Endothelial cell of umbilical vein (primary cell): ENCODE measurements at regions of chr2 and their contacts with region 1.

Region 1: DNA sequence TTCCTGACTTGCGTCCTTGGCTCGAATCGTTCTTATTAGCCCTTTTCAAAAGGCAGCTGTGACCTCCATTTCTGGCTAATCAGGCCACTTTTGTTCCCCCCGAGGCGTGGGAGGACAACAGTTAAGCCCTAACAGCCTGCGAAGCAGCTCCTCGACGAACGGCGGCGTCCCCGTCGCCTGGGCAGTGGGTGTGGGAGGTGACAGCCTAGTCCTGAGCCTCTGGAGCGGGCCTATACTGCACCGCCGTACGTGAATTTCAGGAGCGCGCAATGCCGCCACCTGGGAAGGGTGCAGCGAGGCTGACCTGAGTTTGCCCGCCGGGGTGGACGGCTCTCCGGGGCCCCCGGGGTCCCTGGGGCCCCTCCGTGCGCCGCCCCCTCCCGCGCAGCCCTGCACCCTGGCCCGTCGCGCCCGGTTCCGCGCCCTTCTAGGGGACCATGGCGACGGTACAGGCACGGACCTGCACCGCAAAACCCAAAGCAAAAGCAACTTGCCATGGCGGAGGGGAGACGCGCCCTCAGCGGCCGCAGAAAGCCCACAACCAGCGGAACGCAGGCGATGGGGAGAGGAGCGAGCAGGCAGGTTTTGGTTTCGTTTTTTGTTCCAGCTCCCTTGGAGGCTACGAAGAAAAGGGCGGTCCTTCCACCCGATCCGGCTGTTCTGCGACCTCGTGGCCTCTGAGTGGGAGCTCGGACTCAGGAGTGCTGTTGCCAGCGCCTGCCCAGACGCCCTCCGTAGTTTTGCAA is at the start of gene RBM43:
- DNase-seq: peak; percentile 91
- H3K4me3 ChIP-seq: peak within 1 kb of the TSS; percentile 48 to 88 (median 82)
- H3K27ac ChIP-seq: peak within 1 kb of the TSS; percentile 91
- H3K4me1 ChIP-seq: peaks cover 9% of the 10 kb centered on the region
- H3K27me3 ChIP-seq: no peaks in the 10 kb centered on the region
- CTCF ChIP-seq: no peak
- POLR2A ChIP-seq: peak; percentile 51
- total RNA-seq, gene RBM43: 6.4 and 6.5 TPM in 2 replicates

Region 2: DNA sequence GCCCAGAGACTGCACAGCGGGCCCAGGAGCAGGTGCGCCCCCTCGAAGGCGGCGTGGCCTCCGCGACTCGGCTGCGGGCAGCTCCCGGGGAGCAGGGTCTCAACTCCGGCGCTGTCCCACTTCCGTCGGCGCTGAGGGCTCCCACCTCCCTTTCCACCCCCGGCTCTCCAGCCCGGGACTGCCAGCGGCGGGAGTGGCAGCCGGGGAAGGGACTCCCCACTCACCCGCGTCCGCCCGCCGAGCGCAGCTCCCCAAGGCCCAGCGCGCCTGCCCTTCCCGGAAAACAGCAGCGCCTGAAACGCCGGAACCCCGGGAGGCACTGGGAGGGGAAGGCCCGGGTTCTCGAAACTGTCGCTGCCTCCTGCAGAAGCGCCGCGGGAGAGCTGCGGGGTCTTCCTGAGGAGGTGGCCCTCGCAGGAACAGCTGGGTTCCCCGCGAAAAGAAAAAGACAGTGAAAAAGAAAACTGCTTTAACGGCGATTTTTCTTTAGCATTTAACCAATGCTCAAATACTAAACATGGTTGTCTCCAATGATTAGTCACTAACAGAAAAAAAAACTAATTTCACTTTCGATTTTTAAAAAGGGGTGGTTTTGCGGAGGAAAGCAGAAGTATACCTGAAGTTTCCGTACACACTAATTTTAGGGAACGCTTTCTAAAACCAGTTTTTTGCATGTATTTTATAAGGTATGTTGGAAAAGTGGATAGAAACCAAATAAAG is 28.1 kb after region 1 on chr2 and contains the start of gene NMI:
- CTCF ChIA-PET with region 1: interaction called, 6 read pairs
- POLR2A ChIA-PET with region 1: interaction called, 4 read pairs
- dilution Hi-C with region 1: no loop called
- intact Hi-C with region 1: loop called (anchors 1 kb)
- DNase-seq: peak; percentile 82
- H3K4me3 ChIP-seq: peak within 1 kb of the TSS; percentile 75 to 99 (median 78)
- H3K27ac ChIP-seq: peak within 1 kb of the TSS; percentile 90
- H3K4me1 ChIP-seq: peaks cover 16% of the 10 kb centered on the region
- H3K27me3 ChIP-seq: no peaks in the 10 kb centered on the region
- CTCF ChIP-seq: peak in 1 of 2 donors; percentile 15
- POLR2A ChIP-seq: peak; percentile 53
- total RNA-seq, gene NMI: 17.1 and 24.9 TPM in 2 replicates

Region 3: DNA sequence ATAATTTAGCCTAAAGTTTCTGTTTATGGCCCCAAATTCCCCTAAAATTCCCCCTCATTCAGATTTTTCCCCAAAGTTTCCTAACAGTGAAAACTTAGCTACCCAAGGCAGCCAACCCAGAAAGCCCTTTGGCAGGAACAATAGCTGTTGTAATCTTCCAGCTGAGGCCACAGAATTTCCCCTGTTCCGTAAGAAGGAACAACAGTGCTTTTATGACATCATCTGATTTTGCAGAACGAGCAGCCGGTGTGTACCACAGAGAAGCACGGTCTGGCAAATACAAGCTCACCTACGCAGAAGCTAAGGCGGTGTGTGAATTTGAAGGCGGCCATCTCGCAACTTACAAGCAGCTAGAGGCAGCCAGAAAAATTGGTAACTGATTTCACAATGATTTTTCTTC is 102.3 kb after region 1 on chr2:
- CTCF ChIA-PET with region 1: no interaction called
- POLR2A ChIA-PET with region 1: no interaction called
- dilution Hi-C with region 1: no loop called
- intact Hi-C with region 1: no loop called
- DNase-seq: peak; percentile 40
- H3K4me3 ChIP-seq: no peak overlapping the region
- H3K27ac ChIP-seq: no peak overlapping the region
- H3K4me1 ChIP-seq: no peaks in the 10 kb centered on the region
- H3K27me3 ChIP-seq: no peaks in the 10 kb centered on the region
- CTCF ChIP-seq: no peak
- POLR2A ChIP-seq: no peak

Region 4: DNA sequence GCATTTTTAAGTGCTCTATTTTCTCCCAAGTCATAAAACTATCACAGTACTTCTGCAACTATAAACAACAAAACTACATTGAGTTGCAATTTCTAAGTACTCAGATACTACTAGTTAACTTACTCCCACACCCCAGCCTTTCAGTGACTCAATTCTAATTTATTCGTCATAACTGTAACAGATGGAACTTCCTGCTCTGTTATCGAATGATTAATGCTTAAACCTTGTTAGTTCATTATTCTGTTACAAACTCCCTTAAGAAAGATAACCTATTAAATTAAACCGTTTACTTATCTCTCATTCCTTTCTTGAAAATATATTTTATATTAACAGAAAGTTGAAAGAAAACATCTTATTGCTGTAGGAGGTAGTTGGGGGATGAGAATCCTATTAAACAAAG is 113.0 kb after region 1 on chr2:
- CTCF ChIA-PET with region 1: no interaction called
- POLR2A ChIA-PET with region 1: no interaction called
- dilution Hi-C with region 1: no loop called
- intact Hi-C with region 1: loop called (anchors 1 kb)
- DNase-seq: peak; percentile 66
- H3K4me3 ChIP-seq: no peak overlapping the region
- H3K27ac ChIP-seq: peak overlapping the region; percentile 55
- H3K4me1 ChIP-seq: peaks cover 10% of the 10 kb centered on the region
- H3K27me3 ChIP-seq: no peaks in the 10 kb centered on the region
- CTCF ChIP-seq: no peak
- POLR2A ChIP-seq: no peak

Region 5: DNA sequence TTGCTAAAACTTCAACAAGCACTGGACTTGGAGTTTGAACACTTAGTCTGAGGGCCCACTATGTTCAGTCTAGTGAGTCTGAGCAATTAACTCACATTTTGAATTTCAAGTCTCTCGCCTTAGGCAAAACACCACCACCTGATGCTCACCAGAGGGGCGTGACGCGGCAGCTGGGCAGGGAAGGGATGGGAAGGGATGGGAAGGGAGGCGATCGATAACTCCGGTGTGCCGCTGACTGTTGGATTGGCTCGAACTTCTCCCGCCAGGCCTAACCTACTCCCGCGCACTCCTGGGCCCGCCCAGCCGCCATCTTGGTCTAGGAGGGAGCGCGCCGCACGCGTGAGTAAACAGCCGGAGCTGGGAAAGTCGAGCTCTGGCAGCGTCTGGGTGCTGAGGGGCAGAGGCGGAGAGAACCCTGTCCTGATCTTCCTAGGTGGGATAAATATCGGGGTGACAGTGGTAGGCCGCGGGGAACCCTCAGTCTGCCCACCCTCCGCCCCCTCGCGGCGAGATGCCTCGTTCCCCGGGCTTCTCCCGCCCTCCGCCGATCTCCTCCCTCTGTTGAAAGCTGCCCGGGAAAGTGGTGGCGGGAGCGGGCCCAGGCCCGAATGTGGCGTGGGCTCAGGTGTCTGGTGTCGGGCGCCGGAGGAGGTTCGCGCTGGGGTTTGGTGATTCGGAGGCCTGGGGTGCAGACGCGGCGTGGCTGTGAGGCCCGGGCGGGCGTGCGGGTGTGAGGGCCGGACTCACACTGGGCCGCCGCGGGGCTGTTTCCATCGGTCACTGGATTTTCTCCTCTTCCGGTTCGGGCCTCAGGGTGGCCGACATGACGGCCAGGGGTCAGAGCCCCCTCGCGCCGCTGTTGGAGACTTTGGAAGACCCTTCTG is 148.4 kb after region 1 on chr2 and contains the start of gene RIF1:
- CTCF ChIA-PET with region 1: interaction called, 14 read pairs
- POLR2A ChIA-PET with region 1: no interaction called
- dilution Hi-C with region 1: no loop called
- intact Hi-C with region 1: loop called (anchors 1 kb)
- DNase-seq: peak; percentile 90
- H3K4me3 ChIP-seq: peak within 1 kb of the TSS; percentile 89 to 100 (median 97)
- H3K27ac ChIP-seq: peak within 1 kb of the TSS; percentile 60
- H3K4me1 ChIP-seq: peaks cover 7% of the 10 kb centered on the region
- H3K27me3 ChIP-seq: no peaks in the 10 kb centered on the region
- CTCF ChIP-seq: peak; percentile 50 to 79
- POLR2A ChIP-seq: peak; percentile 77
- total RNA-seq, gene RIF1: 43.7 and 55.3 TPM in 2 replicates

Region 6: DNA sequence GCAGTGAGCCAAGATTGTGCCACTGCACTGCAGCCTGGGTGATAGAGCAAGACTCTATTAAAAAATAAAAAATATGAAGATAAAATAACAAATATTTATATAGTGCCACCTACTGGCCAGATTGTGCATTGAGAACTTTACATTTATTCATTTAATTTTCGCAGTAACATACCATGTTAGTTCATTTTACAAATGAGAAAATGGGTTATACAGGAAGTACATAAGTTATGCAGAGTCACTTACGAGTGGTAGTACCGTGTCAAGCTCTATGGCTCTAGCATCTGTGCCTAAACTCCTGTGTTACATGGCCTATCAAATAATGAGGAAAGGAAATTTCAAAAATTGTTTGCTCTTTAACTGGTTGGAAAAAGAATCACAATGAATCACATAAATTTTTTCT is 176.2 kb after region 1 on chr2:
- CTCF ChIA-PET with region 1: interaction called, 17 read pairs
- POLR2A ChIA-PET with region 1: no interaction called
- dilution Hi-C with region 1: no loop called
- intact Hi-C with region 1: loop called (anchors 2 kb)
- DNase-seq: peak; percentile 58
- H3K4me3 ChIP-seq: no peak overlapping the region
- H3K27ac ChIP-seq: no peak overlapping the region
- H3K4me1 ChIP-seq: no peaks in the 10 kb centered on the region
- H3K27me3 ChIP-seq: no peaks in the 10 kb centered on the region
- CTCF ChIP-seq: peak; percentile 25 to 39
- POLR2A ChIP-seq: no peak

Region 7: DNA sequence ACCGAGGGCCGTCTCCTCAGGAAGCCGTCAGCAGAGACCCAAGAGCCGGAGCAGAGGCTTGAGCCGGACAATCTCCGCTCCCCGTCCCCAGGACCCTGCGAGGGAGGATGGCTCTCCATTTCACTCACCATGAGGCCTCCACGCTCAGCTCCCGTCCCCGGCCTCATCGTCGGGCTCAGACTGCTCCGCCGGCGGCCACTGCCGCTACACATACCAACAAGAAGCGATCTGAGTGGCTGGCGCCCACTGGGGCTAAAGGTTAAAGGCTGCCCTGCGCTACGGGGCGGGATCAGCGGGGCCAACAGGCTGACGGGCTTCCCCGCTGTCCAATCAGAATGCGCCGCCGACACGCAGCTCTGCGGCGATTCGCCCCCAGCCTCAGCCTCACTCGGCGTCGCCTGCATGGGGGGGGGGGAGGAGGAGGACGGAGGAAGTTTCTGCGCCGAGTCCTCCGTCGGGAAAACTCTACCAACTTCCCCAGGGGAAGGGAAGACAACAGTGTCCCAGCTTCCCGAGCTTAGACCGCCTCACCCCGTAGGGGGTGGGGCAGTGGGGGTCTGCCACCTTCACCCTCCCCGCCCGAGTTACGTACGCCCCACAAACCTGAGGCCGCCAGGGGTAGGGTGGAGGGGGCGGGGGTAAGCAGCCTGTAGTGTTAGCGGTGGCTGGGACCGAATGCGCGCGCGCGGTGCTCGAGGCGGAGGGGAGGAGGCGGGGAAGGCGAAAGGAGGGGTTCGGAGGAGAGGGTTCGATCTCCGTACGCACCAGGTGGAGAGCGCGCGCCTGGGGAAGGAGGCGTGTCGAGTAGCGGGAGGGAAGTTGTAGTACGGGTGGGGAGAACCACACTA is 1456.0 kb after region 1 on chr2 and contains the start of gene PRPF40A:
- CTCF ChIA-PET with region 1: no interaction called
- POLR2A ChIA-PET with region 1: no interaction called
- dilution Hi-C with region 1: no loop called
- intact Hi-C with region 1: loop called (anchors 5 kb)
- DNase-seq: peak; percentile 99
- H3K4me3 ChIP-seq: peak within 1 kb of the TSS; percentile 72 to 99 (median 87)
- H3K27ac ChIP-seq: peak within 1 kb of the TSS; percentile 85
- H3K4me1 ChIP-seq: peaks cover 17% of the 10 kb centered on the region
- H3K27me3 ChIP-seq: no peaks in the 10 kb centered on the region
- CTCF ChIP-seq: no peak
- POLR2A ChIP-seq: peak; percentile 45
- total RNA-seq, gene PRPF40A: 99.5 and 123 TPM in 2 replicates